ENCODE measurements at regions of chr14 and their contacts with region 1.

Region 1: DNA sequence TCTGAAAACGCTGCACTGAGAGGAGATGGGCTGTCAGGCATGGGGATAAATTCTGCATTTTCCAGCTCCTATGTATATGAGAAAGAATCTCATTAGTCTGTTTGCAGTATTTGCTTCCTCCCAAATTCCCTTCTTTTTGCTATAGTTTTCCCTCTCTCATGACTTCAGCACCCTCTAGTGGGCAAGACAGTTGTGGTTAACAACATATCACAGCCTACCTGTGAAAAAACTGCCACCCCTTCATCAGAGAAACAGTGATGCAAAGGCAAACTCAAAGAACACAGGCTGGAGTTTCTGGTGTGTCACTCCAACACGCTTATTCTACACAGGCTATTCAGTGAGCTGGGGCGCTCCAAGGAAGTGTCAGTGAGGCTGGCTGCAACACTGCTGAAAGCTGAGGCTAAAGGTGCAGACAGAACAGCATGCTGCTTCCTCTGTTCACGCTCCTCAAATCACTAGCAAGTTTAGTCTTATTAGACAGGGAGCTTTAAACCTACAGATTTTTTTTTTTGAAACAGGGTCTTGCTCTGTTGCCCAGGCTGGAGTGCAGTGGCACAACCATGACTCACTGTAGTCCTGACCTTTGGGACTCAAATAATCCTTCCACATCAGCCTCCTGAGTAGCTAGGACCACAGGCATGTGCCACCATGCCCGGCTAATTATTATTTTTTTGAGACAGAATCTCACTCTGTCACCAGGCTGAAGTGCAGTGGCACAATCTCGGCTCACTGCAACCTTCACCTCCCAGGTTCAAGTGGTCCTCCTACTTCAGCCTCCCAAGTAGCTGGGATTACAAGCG is 19.3 kb downstream of the ZC2HC1C start:
- DNase-seq: peak; percentile 70
- H3K4me3 ChIP-seq: no peak overlapping the region
- H3K27ac ChIP-seq: no peak overlapping the region
- H3K4me1 ChIP-seq: peaks cover 4% of the 10 kb centered on the region
- H3K27me3 ChIP-seq: no peaks in the 10 kb centered on the region
- CTCF ChIP-seq: peak; percentile 62 to 74
- POLR2A ChIP-seq: no peak

Region 2: GRCh38 chr14:74860906-74861733 is 227.7 kb before region 1 on chr14:
- CTCF ChIA-PET with region 1: interaction called, 109 read pairs
- POLR2A ChIA-PET with region 1: no interaction called
- dilution Hi-C with region 1: no loop called
- intact Hi-C with region 1: loop called (anchors 1 kb)
- DNase-seq: peak; percentile 83
- H3K4me3 ChIP-seq: no peak overlapping the region
- H3K27ac ChIP-seq: no peak overlapping the region
- H3K4me1 ChIP-seq: no peaks in the 10 kb centered on the region
- H3K27me3 ChIP-seq: no peaks in the 10 kb centered on the region
- CTCF ChIP-seq: peak; percentile 85 to 86
- POLR2A ChIP-seq: no peak

Region 3: GRCh38 chr14:74905375-74906142 is 183.2 kb before region 1 on chr14:
- CTCF ChIA-PET with region 1: interaction called, 67 read pairs
- POLR2A ChIA-PET with region 1: no interaction called
- dilution Hi-C with region 1: no loop called
- intact Hi-C with region 1: no loop called
- DNase-seq: peak; percentile 52
- H3K4me3 ChIP-seq: no peak overlapping the region
- H3K27ac ChIP-seq: no peak overlapping the region
- H3K4me1 ChIP-seq: peaks cover 5% of the 10 kb centered on the region
- H3K27me3 ChIP-seq: no peaks in the 10 kb centered on the region
- CTCF ChIP-seq: peak; percentile 94 to 95
- POLR2A ChIP-seq: no peak

Region 4: GRCh38 chr14:74922739-74923401 is 165.9 kb before region 1 on chr14 and contains the start of gene RPS6KL1:
- CTCF ChIA-PET with region 1: interaction called, 53 read pairs
- POLR2A ChIA-PET with region 1: no interaction called
- dilution Hi-C with region 1: no loop called
- intact Hi-C with region 1: no loop called
- DNase-seq: peak; percentile 87
- H3K4me3 ChIP-seq: peak within 1 kb of the TSS; percentile 55 to 69 (median 58)
- H3K27ac ChIP-seq: peak within 1 kb of the TSS; percentile 50
- H3K4me1 ChIP-seq: peaks cover 5% of the 10 kb centered on the region
- H3K27me3 ChIP-seq: no peaks in the 10 kb centered on the region
- CTCF ChIP-seq: no peak
- POLR2A ChIP-seq: no peak
- total RNA-seq, gene RPS6KL1: 23.8 and 25.6 TPM in 2 replicates

Region 5: DNA sequence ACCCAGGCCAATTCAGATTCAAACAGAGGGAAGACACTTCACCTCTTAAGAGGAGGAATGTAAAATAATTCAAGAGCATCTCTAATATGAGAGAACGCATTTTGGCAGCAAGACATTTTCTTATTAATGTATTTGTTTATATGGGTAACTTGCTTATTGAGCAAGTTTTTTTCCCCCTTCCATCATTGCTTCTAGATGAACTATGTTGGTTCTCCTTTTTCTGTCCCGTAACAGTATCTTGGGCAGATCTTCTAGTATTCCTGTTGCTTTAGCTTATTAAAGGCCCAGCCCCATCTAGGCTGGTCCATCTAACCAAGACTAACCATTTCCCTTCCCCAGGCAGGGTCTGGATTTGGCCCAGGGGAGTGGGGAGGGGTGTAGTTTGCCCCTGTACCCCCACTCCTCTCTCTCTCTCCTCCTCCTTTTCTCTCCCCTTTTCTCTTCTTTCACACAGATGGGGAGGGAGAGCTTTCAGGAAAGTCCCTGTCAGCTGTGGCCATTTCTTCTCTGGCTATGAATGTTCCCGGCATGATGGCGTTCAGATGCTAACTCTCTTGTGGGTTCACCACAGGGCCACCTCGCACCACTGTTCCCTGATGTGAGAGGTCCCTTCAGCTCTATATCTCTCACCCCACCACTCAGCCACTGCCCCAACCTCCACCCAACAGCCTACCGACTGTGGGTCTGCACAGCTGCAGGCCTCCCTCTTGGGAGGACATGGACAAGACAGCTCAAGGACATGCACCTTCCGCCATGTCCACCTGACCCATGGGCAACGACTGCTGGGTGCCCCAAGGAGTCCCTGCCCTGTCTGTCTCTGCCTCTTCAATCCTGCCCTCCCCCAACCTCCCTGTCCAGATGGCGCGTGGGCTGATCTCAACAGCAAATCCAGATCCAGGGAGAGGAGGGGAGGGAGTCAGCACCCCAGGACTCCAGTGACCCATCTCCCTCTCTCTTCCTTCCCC is 150.0 kb before region 1 on chr14:
- CTCF ChIA-PET with region 1: interaction called, 73 read pairs
- POLR2A ChIA-PET with region 1: interaction called, 6 read pairs
- dilution Hi-C with region 1: no loop called
- intact Hi-C with region 1: no loop called
- DNase-seq: no peak
- H3K4me3 ChIP-seq: no peak overlapping the region
- H3K27ac ChIP-seq: no peak overlapping the region
- H3K4me1 ChIP-seq: peaks cover 38% of the 10 kb centered on the region
- H3K27me3 ChIP-seq: no peaks in the 10 kb centered on the region
- CTCF ChIP-seq: no peak
- POLR2A ChIP-seq: no peak

Region 6: DNA sequence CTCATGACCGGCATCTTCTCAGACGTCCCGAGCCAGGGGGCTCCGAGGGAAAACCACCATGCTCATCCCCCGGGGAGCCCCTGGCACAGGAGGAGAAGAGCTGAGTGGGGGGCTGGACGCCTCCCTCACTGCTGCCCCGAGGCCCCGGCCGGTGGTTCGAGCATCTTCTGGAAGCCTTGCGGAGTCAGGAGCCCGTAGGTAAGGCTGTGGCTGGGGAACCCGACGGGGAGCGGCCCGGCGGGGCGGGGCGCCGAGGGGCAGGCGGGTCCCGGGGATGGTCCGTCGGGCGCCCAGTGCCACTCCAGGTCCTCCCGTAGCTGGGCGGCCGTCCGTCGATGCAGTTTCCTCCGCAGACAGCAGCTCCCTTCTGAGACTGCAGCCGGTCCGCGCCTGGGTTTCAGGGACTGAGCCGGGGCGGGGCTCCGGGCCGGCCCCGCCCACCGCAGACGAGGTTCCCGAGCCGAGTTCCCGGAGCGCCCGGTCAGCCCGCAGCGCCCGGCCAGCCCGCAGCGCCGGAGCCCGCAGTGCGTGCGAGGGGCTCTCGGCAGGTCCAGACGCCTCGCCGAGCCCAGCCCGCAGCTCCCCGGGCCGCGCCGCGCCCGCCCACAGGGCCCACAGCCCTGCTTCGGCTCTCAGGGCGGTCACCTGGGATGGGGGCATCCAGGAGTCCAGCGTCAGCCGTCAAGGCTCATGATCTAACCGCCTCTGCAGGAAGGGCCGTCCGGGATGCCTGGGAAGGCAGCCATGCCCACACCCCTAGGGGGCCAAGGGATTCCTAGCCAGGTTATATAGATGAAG is 133.3 kb before region 1 on chr14 and contains the start of gene PGF:
- CTCF ChIA-PET with region 1: interaction called, 14 read pairs
- POLR2A ChIA-PET with region 1: no interaction called
- dilution Hi-C with region 1: no loop called
- intact Hi-C with region 1: no loop called
- DNase-seq: peak; percentile 72
- H3K4me3 ChIP-seq: peak within 1 kb of the TSS; percentile 83 to 94 (median 84)
- H3K27ac ChIP-seq: peak within 1 kb of the TSS; percentile 71
- H3K4me1 ChIP-seq: peaks cover 42% of the 10 kb centered on the region
- H3K27me3 ChIP-seq: no peaks in the 10 kb centered on the region
- CTCF ChIP-seq: peak in 1 of 2 donors; percentile 1
- POLR2A ChIP-seq: peak; percentile 99
- total RNA-seq, gene PGF: 206 and 254 TPM in 2 replicates

Region 7: DNA sequence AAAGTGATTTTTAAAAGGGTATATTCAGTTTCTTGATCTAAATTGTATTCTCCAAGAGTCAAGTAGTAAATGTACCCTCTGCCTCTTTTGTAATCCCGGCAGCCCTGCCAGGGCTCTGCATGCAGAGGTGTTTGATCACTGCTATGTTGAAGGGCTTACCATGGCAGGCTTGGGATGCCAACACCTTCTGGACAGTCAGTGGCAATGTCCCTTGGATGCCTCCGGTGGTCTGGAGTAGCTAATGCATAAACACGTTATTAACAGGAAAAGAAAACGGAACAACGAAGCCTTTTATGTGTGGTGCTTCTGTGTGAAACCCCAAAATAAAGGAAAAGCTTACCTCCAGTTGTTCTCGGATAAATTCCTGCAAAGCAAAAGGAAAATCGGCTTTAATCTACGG is 66.1 kb before region 1 on chr14:
- CTCF ChIA-PET with region 1: interaction called, 12 read pairs
- POLR2A ChIA-PET with region 1: no interaction called
- dilution Hi-C with region 1: no loop called
- intact Hi-C with region 1: no loop called
- DNase-seq: peak; percentile 13
- H3K4me3 ChIP-seq: no peak overlapping the region
- H3K27ac ChIP-seq: no peak overlapping the region
- H3K4me1 ChIP-seq: peaks cover 20% of the 10 kb centered on the region
- H3K27me3 ChIP-seq: no peaks in the 10 kb centered on the region
- CTCF ChIP-seq: peak; percentile 33 to 53
- POLR2A ChIP-seq: no peak

Region 8: DNA sequence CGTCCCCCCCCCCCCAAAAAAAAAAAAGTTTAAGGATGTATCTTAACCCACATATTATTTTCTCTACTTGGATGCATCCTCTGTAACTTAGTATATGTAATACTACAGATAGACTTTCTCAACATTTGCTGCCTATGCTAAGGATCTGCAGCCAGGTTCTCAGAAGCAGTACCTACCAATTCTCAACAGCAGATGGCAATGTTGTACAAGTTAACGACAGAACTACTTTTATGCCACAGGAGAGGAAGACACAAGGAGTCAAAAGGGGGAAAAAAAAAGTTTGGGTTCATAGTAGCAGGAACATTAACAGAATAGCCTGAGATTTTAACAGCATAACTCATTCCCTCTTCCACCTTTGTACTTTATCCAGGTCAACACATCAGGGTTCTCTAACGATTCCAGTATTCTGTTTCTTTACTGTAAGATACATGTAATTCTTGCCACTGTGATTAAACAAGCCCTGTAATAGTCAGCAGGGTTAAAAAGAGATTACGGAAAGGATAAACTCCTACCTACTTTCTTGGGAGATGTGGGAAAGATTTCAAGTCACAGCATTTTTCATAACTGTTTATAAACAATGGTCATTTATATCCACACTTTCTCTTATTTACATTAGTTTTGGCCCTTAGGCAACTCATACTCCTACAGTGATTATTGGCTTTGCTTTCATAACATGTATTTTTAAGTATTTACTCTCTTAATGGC is 43.8 kb after region 1 on chr14:
- CTCF ChIA-PET with region 1: no interaction called
- POLR2A ChIA-PET with region 1: no interaction called
- dilution Hi-C with region 1: no loop called
- intact Hi-C with region 1: no loop called
- DNase-seq: peak; percentile 81
- H3K4me3 ChIP-seq: no peak overlapping the region
- H3K27ac ChIP-seq: no peak overlapping the region
- H3K4me1 ChIP-seq: peaks cover 10% of the 10 kb centered on the region
- H3K27me3 ChIP-seq: no peaks in the 10 kb centered on the region
- CTCF ChIP-seq: peak; percentile 38 to 55
- POLR2A ChIP-seq: no peak